ENCODE measurements at regions of chr10 and their contacts with region 1.

Region 1: GRCh38 chr10:33801748-33802147 is 467.3 kb upstream of the NRP1 start:
- DNase-seq: peak; percentile 100
- ATAC-seq: peak; percentile 77
- H3K4me3 ChIP-seq: no peak overlapping the region
- H3K27ac ChIP-seq: peak overlapping the region; percentile 61
- H3K4me1 ChIP-seq: peaks cover 55% of the 10 kb centered on the region
- H3K27me3 ChIP-seq: no peaks in the 10 kb centered on the region
- CTCF ChIP-seq: no peak

Region 2: GRCh38 chr10:33365871-33366411 is 435.8 kb before region 1 on chr10:
- CTCF ChIA-PET with region 1: no interaction called
- POLR2A ChIA-PET with region 1: no interaction called
- intact Hi-C with region 1: loop called (anchors 1 kb)
- DNase-seq: peak; percentile 100
- ATAC-seq: peak; percentile 90
- H3K4me3 ChIP-seq: peak overlapping the region; percentile 9; the same call in 1 of the 2 replicates
- H3K27ac ChIP-seq: peak overlapping the region; percentile 82
- H3K4me1 ChIP-seq: peaks cover 53% of the 10 kb centered on the region
- H3K27me3 ChIP-seq: no peaks in the 10 kb centered on the region
- CTCF ChIP-seq: no peak

Region 3: GRCh38 chr10:33559105-33559504 is 242.6 kb before region 1 on chr10:
- CTCF ChIA-PET with region 1: no interaction called
- POLR2A ChIA-PET with region 1: no interaction called
- intact Hi-C with region 1: loop called (anchors 2 kb)
- DNase-seq: peak; percentile 100
- ATAC-seq: peak; percentile 100
- H3K4me3 ChIP-seq: no peak overlapping the region
- H3K27ac ChIP-seq: no peak overlapping the region
- H3K4me1 ChIP-seq: peaks cover 13% of the 10 kb centered on the region
- H3K27me3 ChIP-seq: no peaks in the 10 kb centered on the region
- CTCF ChIP-seq: peak; percentile 41; the same call in 1 of the 2 replicates

Region 4: DNA sequence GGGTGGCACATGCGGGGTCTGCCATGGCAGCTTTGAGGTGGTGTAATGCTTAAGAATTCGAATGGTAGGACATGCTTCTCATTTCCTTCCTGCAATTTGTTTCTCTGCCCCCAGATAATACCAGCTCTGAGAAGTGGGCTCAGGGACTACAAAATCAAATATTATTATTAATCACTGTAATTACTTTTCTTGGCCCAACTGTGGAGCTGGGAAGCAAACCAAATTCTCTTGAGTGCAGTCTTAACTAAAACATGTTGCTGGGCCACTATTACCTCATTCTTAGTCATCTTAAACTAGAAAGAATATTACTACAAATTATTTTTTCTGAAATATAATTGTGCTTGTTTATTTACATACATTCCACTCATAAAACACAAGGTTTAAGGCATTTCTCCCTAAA is 99.4 kb after region 1 on chr10:
- CTCF ChIA-PET with region 1: no interaction called
- POLR2A ChIA-PET with region 1: no interaction called
- intact Hi-C with region 1: loop called (anchors 2 kb)
- DNase-seq: peak; percentile 98
- ATAC-seq: peak; percentile 83
- H3K4me3 ChIP-seq: no peak overlapping the region
- H3K27ac ChIP-seq: peak overlapping the region; percentile 68
- H3K4me1 ChIP-seq: peaks cover 29% of the 10 kb centered on the region
- H3K27me3 ChIP-seq: no peaks in the 10 kb centered on the region
- CTCF ChIP-seq: peak; percentile 40; the same call in 1 of the 2 replicates

Region 5: GRCh38 chr10:34121781-34122628 is 320.3 kb after region 1 on chr10:
- CTCF ChIA-PET with region 1: no interaction called
- POLR2A ChIA-PET with region 1: no interaction called
- intact Hi-C with region 1: loop called (anchors 5 kb)
- DNase-seq: peak; percentile 87
- ATAC-seq: peak; percentile 33
- H3K4me3 ChIP-seq: peak overlapping the region; percentile 2; the same call in 1 of the 2 replicates
- H3K27ac ChIP-seq: peak overlapping the region; percentile 49
- H3K4me1 ChIP-seq: peaks cover 33% of the 10 kb centered on the region
- H3K27me3 ChIP-seq: no peaks in the 10 kb centered on the region
- CTCF ChIP-seq: no peak

Region 6: GRCh38 chr10:34235164-34235832 is 433.6 kb after region 1 on chr10:
- CTCF ChIA-PET with region 1: no interaction called
- POLR2A ChIA-PET with region 1: no interaction called
- intact Hi-C with region 1: loop called (anchors 5 kb)
- DNase-seq: peak; percentile 100
- ATAC-seq: peak; percentile 100
- H3K4me3 ChIP-seq: peak overlapping the region; percentile 42
- H3K27ac ChIP-seq: peak overlapping the region; percentile 47
- H3K4me1 ChIP-seq: peaks cover 18% of the 10 kb centered on the region
- H3K27me3 ChIP-seq: no peaks in the 10 kb centered on the region
- CTCF ChIP-seq: no peak